H1 (cell line): ENCODE measurements at regions of chr2 and their contacts with region 1.

Region 1: DNA sequence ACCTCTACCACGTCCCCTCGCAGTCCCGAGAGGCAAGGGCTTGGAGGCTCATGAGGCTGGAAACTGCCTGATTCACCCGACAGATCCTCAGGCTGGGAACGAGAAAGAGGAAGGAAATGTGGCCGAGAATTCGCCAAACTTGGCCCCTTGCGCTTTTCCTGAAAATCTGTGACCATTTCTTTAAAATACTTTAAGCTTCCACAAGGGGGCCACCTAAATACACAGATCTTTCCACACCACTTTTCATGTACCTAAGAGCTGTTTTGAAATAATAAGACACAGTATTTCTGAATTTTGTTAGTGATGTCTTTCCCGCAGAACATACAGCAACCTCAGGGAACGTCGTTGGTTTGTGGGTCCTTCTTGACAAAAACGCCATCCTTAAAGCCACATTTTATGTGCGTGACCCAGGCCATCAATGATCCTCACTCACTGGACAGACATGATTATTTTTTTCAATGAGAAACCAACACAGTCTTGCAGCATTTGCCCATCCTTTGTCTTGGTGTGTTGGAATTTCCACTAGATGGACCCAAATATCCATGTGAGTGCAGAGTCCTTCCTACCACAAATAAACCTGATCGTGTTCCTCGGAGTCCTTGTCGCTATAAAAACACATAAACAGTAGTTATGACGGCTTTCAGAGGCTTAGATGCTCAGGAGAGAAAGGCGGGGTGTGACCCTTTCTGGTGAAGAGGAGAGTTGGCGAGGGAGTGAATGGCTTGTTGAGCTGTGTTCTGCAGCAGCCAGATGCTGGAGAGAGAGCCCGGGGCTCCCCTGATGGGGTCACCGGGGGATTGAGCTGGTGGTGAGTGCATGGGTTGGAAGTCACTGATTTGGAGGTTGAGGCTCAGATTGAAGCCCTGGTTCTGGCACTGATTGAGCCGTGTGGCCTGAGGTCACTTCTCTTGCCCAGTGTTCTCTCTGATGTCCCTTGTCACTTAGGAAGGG is 25.0 kb downstream of the DCDC2C start:
- DNase-seq: peak in 1 of 2 experiments; percentile 53
- H3K4me3 ChIP-seq: peak overlapping the region in 3 of 4 experiments; percentile 34 to 49 (median 37); a peak in 6 of 8 replicates
- H3K27ac ChIP-seq: no peak overlapping the region
- H3K4me1 ChIP-seq: peaks cover 3 to 8% (median 5%) of the 10 kb centered on the region in 4 experiments; a peak in 6 of 7 replicates
- H3K27me3 ChIP-seq: no peaks in the 10 kb centered on the region; a peak in 1 of 7 replicates
- CTCF ChIP-seq: peak in 2 of 3 experiments; percentile 51 to 61; a peak in 3 of 4 replicates
- EP300 ChIP-seq: no peak
- POLR2A ChIP-seq: no peak
- RAD21 ChIP-seq: peak; percentile 66 to 72

Region 2: DNA sequence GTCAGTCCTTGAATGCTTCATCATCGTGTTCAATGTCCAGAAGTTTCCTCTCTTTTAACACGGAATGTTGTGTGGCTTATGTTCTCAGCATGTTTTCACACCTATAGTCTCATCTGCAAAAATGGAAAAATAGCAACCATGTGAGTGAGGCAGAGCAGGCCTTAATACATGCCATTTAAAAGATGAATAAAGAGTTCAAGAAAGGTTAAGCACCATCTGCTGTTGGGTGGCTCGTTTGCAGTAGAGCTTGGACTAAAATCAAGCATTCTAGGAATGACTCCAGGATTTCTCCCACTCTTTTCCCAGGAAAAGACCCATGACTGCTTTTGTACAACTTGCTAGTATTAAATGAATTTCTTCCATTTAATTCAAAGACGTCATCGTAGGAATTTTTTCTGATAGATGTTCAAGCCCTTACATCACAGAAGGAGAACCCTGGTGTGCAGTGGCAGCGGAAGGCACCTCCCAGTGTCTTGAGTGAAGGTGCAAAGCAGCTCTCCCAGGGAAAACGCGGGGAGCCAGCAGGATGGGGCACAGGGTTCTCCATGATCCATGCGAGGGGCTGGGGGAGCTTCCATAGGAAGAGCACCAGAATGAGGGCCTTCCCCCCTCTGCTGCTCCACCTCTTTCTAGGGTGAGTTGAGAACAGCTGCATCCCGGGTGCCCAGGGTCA is 15.4 kb before region 1 on chr2:
- CTCF ChIA-PET with region 1: interaction called, 12 read pairs
- POLR2A ChIA-PET with region 1: no interaction called
- DNase-seq: no peak
- H3K4me3 ChIP-seq: no peak overlapping the region
- H3K27ac ChIP-seq: no peak overlapping the region
- H3K4me1 ChIP-seq: no peaks in the 10 kb centered on the region
- H3K27me3 ChIP-seq: no peaks in the 10 kb centered on the region
- CTCF ChIP-seq: no peak
- EP300 ChIP-seq: no peak
- POLR2A ChIP-seq: no peak
- RAD21 ChIP-seq: no peak

Region 3: GRCh38 chr2:3754280-3754679 is 25.9 kb after region 1 on chr2:
- CTCF ChIA-PET with region 1: interaction called, 17 read pairs
- POLR2A ChIA-PET with region 1: no interaction called
- DNase-seq: no peak
- H3K4me3 ChIP-seq: no peak overlapping the region
- H3K27ac ChIP-seq: no peak overlapping the region
- H3K4me1 ChIP-seq: peaks cover 0 to 3% (median 1%) of the 10 kb centered on the region in 4 experiments; a peak in 1 of 7 replicates
- H3K27me3 ChIP-seq: no peaks in the 10 kb centered on the region
- CTCF ChIP-seq: peak; percentile 13 to 27 (median 20); a peak in 3 of 4 replicates
- EP300 ChIP-seq: no peak
- POLR2A ChIP-seq: no peak
- RAD21 ChIP-seq: peak; percentile 41 to 43

Region 4: GRCh38 chr2:3774336-3774735 is 46.0 kb after region 1 on chr2:
- CTCF ChIA-PET with region 1: interaction called, 43 read pairs
- POLR2A ChIA-PET with region 1: no interaction called
- DNase-seq: no peak
- H3K4me3 ChIP-seq: no peak overlapping the region
- H3K27ac ChIP-seq: no peak overlapping the region
- H3K4me1 ChIP-seq: no peaks in the 10 kb centered on the region
- H3K27me3 ChIP-seq: no peaks in the 10 kb centered on the region
- CTCF ChIP-seq: no peak
- EP300 ChIP-seq: no peak
- POLR2A ChIP-seq: no peak
- RAD21 ChIP-seq: no peak; a peak in 1 of 4 replicates

Region 5: GRCh38 chr2:3805201-3805939 is 77.0 kb after region 1 on chr2:
- CTCF ChIA-PET with region 1: interaction called, 46 read pairs
- POLR2A ChIA-PET with region 1: no interaction called
- DNase-seq: peak in 1 of 2 experiments; percentile 83
- H3K4me3 ChIP-seq: no peak overlapping the region
- H3K27ac ChIP-seq: no peak overlapping the region
- H3K4me1 ChIP-seq: no peaks in the 10 kb centered on the region
- H3K27me3 ChIP-seq: no peaks in the 10 kb centered on the region
- CTCF ChIP-seq: peak; percentile 76 to 87 (median 82)
- EP300 ChIP-seq: no peak
- POLR2A ChIP-seq: no peak
- RAD21 ChIP-seq: peak; percentile 70 to 73

Region 6: DNA sequence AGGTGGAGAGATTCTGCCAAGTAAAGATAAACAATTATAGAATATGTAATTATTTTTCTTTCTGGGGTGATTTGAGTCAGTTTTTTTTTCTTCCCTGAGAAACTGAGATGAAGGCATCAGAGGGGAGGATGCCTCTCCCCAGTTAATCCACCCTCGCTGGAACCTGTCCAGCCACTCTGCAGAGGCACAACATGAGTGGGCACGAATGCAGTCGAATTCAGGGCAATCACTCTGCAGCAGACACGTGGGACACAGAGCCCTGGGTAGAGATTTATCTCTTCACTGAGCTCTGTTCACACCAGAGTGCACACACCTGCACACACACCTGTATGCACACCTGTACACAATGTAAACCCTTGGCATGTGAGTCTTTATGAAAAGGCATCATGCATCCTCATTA is 129.2 kb after region 1 on chr2:
- CTCF ChIA-PET with region 1: interaction called, 10 read pairs
- POLR2A ChIA-PET with region 1: no interaction called
- DNase-seq: no peak
- H3K4me3 ChIP-seq: no peak overlapping the region
- H3K27ac ChIP-seq: no peak overlapping the region
- H3K4me1 ChIP-seq: no peaks in the 10 kb centered on the region; a peak in 1 of 7 replicates
- H3K27me3 ChIP-seq: no peaks in the 10 kb centered on the region
- CTCF ChIP-seq: no peak
- EP300 ChIP-seq: no peak
- POLR2A ChIP-seq: no peak
- RAD21 ChIP-seq: no peak

Region 7: GRCh38 chr2:3959372-3959771 is 231.0 kb after region 1 on chr2:
- CTCF ChIA-PET with region 1: interaction called, 12 read pairs
- POLR2A ChIA-PET with region 1: no interaction called
- DNase-seq: peak in 1 of 2 experiments; percentile 13
- H3K4me3 ChIP-seq: no peak overlapping the region
- H3K27ac ChIP-seq: no peak overlapping the region
- H3K4me1 ChIP-seq: no peaks in the 10 kb centered on the region; a peak in 2 of 7 replicates
- H3K27me3 ChIP-seq: no peaks in the 10 kb centered on the region
- CTCF ChIP-seq: peak in 2 of 3 experiments; percentile 59 to 65; a peak in 3 of 4 replicates
- EP300 ChIP-seq: no peak
- POLR2A ChIP-seq: no peak
- RAD21 ChIP-seq: peak; percentile 94 to 95